SK-N-SH (cell line): ENCODE measurements at regions of chr16 and their contacts with region 1.

Region 1: GRCh38 chr16:4358831-4359561 is 7.9 kb upstream of the PAM16 start:
- DNase-seq: peak; percentile 93
- H3K4me3 ChIP-seq: peak overlapping the region in 1 of 2 experiments; percentile 29; a peak in 1 of 4 replicates
- H3K27ac ChIP-seq: no peak overlapping the region
- H3K4me1 ChIP-seq: peaks cover 0 to 10% of the 10 kb centered on the region in 2 experiments; a peak in 1 of 4 replicates
- H3K27me3 ChIP-seq: no peaks in the 10 kb centered on the region
- CTCF ChIP-seq: peak; percentile 96
- EP300 ChIP-seq: no peak
- RAD21 ChIP-seq: peak; percentile 90

Region 2: GRCh38 chr16:4339909-4340308 is 19.1 kb before region 1 on chr16:
- CTCF ChIA-PET with region 1: interaction called, 14 read pairs
- POLR2A ChIA-PET with region 1: no interaction called
- DNase-seq: peak; percentile 88
- H3K4me3 ChIP-seq: no peak overlapping the region
- H3K27ac ChIP-seq: peak overlapping the region in 1 of 2 experiments; percentile 60; a peak in 1 of 4 replicates
- H3K4me1 ChIP-seq: peaks cover 0 to 21% of the 10 kb centered on the region in 2 experiments; a peak in 1 of 4 replicates
- H3K27me3 ChIP-seq: no peaks in the 10 kb centered on the region
- CTCF ChIP-seq: no peak
- EP300 ChIP-seq: no peak
- RAD21 ChIP-seq: peak; percentile 40; the same call in 1 of the 2 replicates

Region 3: DNA sequence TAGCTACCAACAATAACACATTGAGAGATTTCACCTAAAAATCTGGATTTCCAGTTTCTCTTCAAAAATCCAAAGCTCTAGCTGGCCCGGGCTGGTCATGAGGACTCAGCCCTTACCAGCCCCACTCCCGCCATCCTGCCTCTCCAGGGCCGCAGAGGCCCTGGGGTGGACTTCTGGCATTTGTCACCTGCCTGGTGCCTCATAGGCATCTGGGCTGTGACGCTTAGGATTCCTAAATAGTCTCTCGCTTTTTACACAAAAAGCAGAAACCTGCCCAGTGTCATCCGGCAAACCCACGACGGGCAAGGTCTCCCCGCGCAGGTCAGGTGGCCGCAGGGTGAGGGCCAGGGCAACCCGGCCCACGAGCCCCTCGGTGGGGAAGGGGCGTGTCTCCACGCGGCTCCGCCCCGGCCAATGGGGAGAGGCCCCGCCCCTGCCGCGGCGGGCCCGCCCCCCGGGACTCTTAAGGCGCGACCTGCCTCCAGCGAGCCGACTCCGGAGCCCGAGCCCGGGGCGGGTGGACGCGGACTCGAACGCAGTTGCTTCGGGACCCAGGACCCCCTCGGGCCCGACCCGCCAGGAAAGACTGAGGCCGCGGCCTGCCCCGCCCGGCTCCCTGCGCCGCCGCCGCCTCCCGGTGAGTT is 12.5 kb after region 1 on chr16 and contains the start of gene VASN:
- CTCF ChIA-PET with region 1: interaction called, 39 read pairs
- POLR2A ChIA-PET with region 1: no interaction called
- DNase-seq: peak; percentile 98
- H3K4me3 ChIP-seq: peak within 1 kb of the TSS; percentile 77 to 92
- H3K27ac ChIP-seq: peak within 1 kb of the TSS; percentile 83 to 88
- H3K4me1 ChIP-seq: peaks cover 40 to 80% of the 10 kb centered on the region in 2 experiments
- H3K27me3 ChIP-seq: no peaks in the 10 kb centered on the region
- CTCF ChIP-seq: no peak
- EP300 ChIP-seq: peak in 1 of 2 experiments; percentile 51; a peak in 2 of 4 replicates
- RAD21 ChIP-seq: no peak
- polyA plus RNA-seq, gene VASN: 11.4 and 37.4 TPM in 2 replicates

Region 4: GRCh38 chr16:4377573-4378143 is 18.7 kb after region 1 on chr16:
- CTCF ChIA-PET with region 1: interaction called, 18 read pairs
- POLR2A ChIA-PET with region 1: no interaction called
- DNase-seq: no peak
- H3K4me3 ChIP-seq: no peak overlapping the region
- H3K27ac ChIP-seq: no peak overlapping the region; a peak in 1 of 4 replicates
- H3K4me1 ChIP-seq: peaks cover 32 to 68% of the 10 kb centered on the region in 2 experiments
- H3K27me3 ChIP-seq: no peaks in the 10 kb centered on the region
- CTCF ChIP-seq: no peak
- EP300 ChIP-seq: no peak
- RAD21 ChIP-seq: no peak

Region 5: DNA sequence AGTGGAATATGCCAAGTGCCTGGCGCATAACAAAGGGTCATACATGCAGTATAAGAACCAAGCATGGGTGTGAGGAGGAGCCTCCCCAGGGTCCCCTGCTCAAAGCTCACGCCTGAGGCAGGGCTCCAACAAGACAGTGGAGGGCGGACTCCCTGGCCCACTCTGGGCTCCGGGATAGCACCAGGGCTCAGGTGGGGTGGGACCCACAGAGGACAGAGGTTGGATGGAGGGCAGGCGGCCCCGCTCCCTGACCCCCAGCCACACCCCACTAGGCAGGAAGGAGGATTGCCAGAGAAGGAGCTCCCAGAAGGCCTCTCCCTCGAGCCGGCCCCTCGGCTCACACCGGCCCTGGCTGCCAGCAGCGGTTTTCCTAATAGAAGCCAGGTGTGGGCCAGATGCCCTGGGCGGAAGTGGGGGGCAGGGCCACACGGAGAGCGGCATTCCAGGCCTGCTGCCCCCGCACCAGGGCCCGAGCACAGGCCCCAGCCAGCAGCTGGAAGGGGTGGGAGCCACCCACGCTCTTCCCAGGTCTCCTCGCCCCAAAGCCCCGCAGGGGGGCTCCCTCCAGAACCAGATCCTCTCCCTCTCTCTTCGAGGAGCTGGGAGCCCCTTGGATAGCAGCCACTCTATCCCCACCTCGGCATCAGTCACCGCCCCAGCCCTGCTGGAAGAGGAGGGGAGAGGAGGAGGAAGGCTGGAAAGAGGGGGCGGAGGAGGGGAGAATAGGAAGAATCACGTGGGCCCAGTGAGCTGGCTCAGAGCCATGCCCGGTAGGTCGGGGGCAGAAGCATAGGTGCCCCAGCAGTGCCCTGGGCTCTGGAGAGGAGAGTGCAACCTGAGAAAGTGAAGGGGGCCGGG is 33.6 kb after region 1 on chr16:
- CTCF ChIA-PET with region 1: interaction called, 62 read pairs
- POLR2A ChIA-PET with region 1: interaction called, 4 read pairs
- DNase-seq: peak; percentile 94
- H3K4me3 ChIP-seq: no peak overlapping the region
- H3K27ac ChIP-seq: peak overlapping the region; percentile 72 to 97
- H3K4me1 ChIP-seq: peaks cover 21 to 57% of the 10 kb centered on the region in 2 experiments; a peak in 3 of 4 replicates
- H3K27me3 ChIP-seq: no peaks in the 10 kb centered on the region
- CTCF ChIP-seq: no peak
- EP300 ChIP-seq: peak; percentile 83 to 91
- RAD21 ChIP-seq: no peak

Region 6: GRCh38 chr16:4410335-4411075 is 51.5 kb after region 1 on chr16:
- CTCF ChIA-PET with region 1: interaction called, 558 read pairs
- POLR2A ChIA-PET with region 1: interaction called, 3 read pairs
- DNase-seq: peak; percentile 76
- H3K4me3 ChIP-seq: no peak overlapping the region
- H3K27ac ChIP-seq: no peak overlapping the region; a peak in 1 of 4 replicates
- H3K4me1 ChIP-seq: peaks cover 6 to 24% of the 10 kb centered on the region in 2 experiments; a peak in 1 of 4 replicates
- H3K27me3 ChIP-seq: no peaks in the 10 kb centered on the region
- CTCF ChIP-seq: no peak
- EP300 ChIP-seq: peak in 1 of 2 experiments; percentile 70; a peak in 1 of 4 replicates
- RAD21 ChIP-seq: no peak

Region 7: DNA sequence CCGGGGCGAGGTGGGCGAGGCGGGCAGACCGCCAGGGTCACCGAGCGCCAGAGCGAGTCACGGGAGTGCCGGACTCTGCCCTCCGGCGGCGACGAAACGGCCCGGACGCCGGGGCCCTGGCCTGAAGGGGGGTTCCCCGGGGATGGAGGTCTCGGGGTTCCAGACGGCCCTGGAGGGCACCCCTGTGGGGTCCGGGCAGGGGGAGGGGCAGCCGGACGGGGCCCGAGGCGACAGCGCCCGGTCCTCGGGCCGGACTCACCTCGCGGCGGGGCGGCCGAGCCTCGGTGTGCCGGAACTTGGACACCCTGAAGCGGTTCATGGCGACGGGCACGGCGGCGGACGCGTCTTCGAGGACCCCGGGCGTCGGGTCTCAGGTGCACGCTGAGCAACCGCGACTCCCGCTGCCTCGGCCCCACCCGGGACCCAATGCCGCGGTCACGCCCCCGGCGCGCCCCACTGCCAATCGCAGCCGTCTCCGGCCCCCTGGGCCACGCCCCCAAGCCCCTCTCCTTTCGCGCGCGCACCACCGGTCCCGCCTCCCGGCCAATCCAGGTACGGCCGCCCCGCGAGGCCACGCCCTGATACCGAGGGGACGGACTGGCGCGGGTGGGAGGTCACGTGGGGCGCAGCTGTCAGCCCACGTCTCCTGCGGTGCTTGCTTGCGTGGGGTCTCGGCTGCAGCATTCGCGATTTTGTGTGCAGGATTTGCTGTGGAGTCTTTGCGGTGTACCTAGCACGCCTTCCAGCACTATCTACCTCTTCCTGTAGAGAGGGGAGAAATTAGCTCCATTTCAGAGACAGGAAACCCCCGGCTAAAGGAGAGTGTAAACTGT is 57.4 kb after region 1 on chr16 and contains the start of gene CORO7:
- CTCF ChIA-PET with region 1: interaction called, 49 read pairs
- POLR2A ChIA-PET with region 1: no interaction called
- DNase-seq: peak; percentile 99
- H3K4me3 ChIP-seq: peak within 1 kb of the TSS; percentile 78 to 87
- H3K27ac ChIP-seq: peak within 1 kb of the TSS; percentile 20 to 58; a peak in 2 of 4 replicates
- H3K4me1 ChIP-seq: peaks cover 6 to 20% of the 10 kb centered on the region in 2 experiments; a peak in 1 of 4 replicates
- H3K27me3 ChIP-seq: no peaks in the 10 kb centered on the region
- CTCF ChIP-seq: no peak
- EP300 ChIP-seq: no peak
- RAD21 ChIP-seq: no peak
- polyA plus RNA-seq, gene CORO7: 21.9 and 25.8 TPM in 2 replicates

Region 8: GRCh38 chr16:4486126-4486893 is 127.3 kb after region 1 on chr16:
- CTCF ChIA-PET with region 1: no interaction called
- POLR2A ChIA-PET with region 1: no interaction called
- DNase-seq: no peak
- H3K4me3 ChIP-seq: no peak overlapping the region
- H3K27ac ChIP-seq: no peak overlapping the region
- H3K4me1 ChIP-seq: peaks cover 0 to 24% of the 10 kb centered on the region in 2 experiments; a peak in 2 of 4 replicates
- H3K27me3 ChIP-seq: no peaks in the 10 kb centered on the region
- CTCF ChIP-seq: no peak
- EP300 ChIP-seq: no peak
- RAD21 ChIP-seq: no peak